ENCODE measurements at regions of chr1 and their contacts with region 1.

Region 1: DNA sequence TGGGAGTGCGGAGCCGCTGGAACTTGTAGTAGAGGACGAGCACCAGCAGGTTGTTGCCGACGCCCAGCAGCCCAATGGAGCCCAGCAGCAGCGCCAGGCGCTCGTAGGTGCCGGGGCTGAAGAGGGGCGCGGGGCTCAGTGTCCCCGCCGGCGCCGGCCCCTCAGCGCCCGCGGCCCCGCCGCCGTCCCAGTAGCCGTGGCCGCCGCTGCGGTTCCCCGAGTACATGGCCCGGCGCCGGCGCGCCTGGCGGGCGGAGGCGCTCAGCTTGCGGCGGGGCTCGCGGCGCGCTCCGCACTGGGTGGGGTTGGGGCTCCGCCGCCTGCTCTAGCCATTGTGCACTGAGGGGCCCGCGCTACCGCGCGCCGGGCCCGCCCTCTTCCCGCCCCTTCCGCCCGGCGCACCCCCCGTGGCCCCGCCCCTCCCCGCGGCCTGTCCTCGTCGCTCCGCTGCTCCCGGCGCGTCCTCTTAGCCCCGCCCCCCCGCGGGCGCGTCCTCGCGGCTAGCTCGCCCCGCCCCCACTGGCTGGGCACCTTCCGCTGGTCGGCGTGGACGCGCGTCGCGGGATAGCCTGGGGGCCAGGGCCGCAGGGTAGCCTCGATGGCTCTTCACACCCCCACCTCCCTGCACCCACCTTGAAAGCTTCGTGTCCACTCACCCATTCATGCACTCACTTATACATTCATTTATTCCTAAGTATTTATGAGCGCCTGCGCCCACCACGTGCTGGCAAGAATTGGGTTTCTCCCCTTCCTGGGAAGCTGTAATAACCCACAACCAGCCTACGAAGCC is at the starts of genes CHML and OPN3:
- DNase-seq: peak; percentile 75 to 95 (median 89)
- ATAC-seq: peak; percentile 94
- H3K4me3 ChIP-seq: peak within 1 kb of the TSS; percentile 87
- H3K4me3 Mint-ChIP-seq: peak within 1 kb of the TSS; percentile 93
- H3K27ac ChIP-seq: peak within 1 kb of the TSS; percentile 55 to 58
- H3K27ac Mint-ChIP-seq: peak within 1 kb of the TSS; percentile 82
- H3K4me1 ChIP-seq: peaks cover 17% of the 10 kb centered on the region
- H3K4me1 Mint-ChIP-seq: peaks cover 39% of the 10 kb centered on the region
- H3K27me3 ChIP-seq: no peaks in the 10 kb centered on the region
- H3K27me3 Mint-ChIP-seq: no peaks in the 10 kb centered on the region
- CTCF ChIP-seq: no peak
- total RNA-seq, gene CHML: 9.1 to 10.3 TPM
- total RNA-seq, gene OPN3: 1.9 to 2.3 TPM

Region 2: DNA sequence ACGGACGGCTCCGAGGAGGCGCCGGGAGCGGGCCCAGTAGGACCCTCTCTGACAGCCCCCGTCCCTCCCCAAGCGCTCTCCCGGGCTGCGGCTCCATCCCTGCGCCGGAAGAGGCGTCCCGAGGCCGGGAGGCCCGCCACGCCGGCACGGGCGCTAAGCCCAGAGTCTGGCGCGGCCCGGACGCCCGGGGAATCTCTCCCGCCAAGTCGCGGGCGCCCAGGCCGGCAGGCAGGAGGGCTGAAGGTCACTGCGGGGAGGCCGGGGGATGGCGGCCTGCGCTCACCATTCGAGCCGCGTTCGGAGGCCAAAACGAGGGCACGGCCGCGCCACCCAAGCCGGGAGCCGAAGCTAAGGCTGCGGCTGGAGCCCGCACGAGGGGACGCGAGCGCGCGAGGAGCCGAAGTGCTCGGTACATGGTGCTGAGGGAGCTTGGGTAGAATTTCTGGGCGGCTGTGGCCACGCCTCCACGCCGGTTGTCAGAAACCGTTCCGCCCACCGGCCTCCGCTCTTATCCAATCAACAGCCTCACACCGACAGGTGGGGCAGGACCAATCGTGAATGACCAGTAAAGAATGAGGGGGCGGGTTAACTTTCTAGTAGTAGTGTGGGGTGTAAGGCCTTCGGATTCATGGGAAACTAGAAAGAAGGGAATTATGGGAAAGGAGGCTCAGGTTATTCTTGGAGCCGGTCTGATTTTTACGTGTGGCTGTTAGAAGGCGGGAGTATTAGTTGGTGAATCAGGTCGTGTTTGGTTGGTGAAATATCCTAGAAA is 120.7 kb before region 1 on chr1 and contains the start of gene FH:
- CTCF ChIA-PET with region 1: no interaction called
- POLR2A ChIA-PET with region 1: interaction called, 4 read pairs
- intact Hi-C with region 1: loop called in 1 of 2 experiments (anchors 5 kb)
- DNase-seq: peak; percentile 82 to 98 (median 91)
- ATAC-seq: peak; percentile 97
- H3K4me3 ChIP-seq: peak within 1 kb of the TSS; percentile 64
- H3K4me3 Mint-ChIP-seq: peak within 1 kb of the TSS; percentile 97
- H3K27ac ChIP-seq: peak within 1 kb of the TSS in 1 of 2 donors; percentile 70
- H3K27ac Mint-ChIP-seq: peak within 1 kb of the TSS; percentile 85
- H3K4me1 ChIP-seq: peaks cover 5% of the 10 kb centered on the region
- H3K4me1 Mint-ChIP-seq: peaks cover 32% of the 10 kb centered on the region
- H3K27me3 ChIP-seq: peaks cover 8% of the 10 kb centered on the region in 2 experiments
- H3K27me3 Mint-ChIP-seq: peaks cover 25% of the 10 kb centered on the region
- CTCF ChIP-seq: no peak
- total RNA-seq, gene FH: 13.0 to 16.9 TPM

Region 3: GRCh38 chr1:241627453-241628259 is 12.6 kb before region 1 on chr1:
- CTCF ChIA-PET with region 1: interaction called, 9 read pairs
- POLR2A ChIA-PET with region 1: interaction called, 15 read pairs
- intact Hi-C with region 1: no loop called
- DNase-seq: peak in 10 of 14 experiments; percentile 8 to 82 (median 40)
- ATAC-seq: peak; percentile 89
- H3K4me3 ChIP-seq: peak overlapping the region; percentile 30
- H3K4me3 Mint-ChIP-seq: peak overlapping the region; percentile 88
- H3K27ac ChIP-seq: peak overlapping the region; percentile 13 to 59
- H3K27ac Mint-ChIP-seq: peak overlapping the region; percentile 94
- H3K4me1 ChIP-seq: peaks cover 2% of the 10 kb centered on the region
- H3K4me1 Mint-ChIP-seq: peaks cover 24% of the 10 kb centered on the region
- H3K27me3 ChIP-seq: no peaks in the 10 kb centered on the region
- H3K27me3 Mint-ChIP-seq: no peaks in the 10 kb centered on the region
- CTCF ChIP-seq: peak; percentile 88

Region 4: GRCh38 chr1:241677201-241677600 is 37.0 kb after region 1 on chr1:
- CTCF ChIA-PET with region 1: interaction called, 6 read pairs
- POLR2A ChIA-PET with region 1: interaction called, 16 read pairs
- intact Hi-C with region 1: loop called (anchors 2 to 5 kb)
- DNase-seq: peak in 7 of 14 experiments; percentile 5 to 79 (median 32)
- ATAC-seq: peak; percentile 96
- H3K4me3 ChIP-seq: peak overlapping the region; percentile 41
- H3K4me3 Mint-ChIP-seq: peak overlapping the region; percentile 78
- H3K27ac ChIP-seq: peak overlapping the region; percentile 46 to 72
- H3K27ac Mint-ChIP-seq: peak overlapping the region; percentile 96
- H3K4me1 ChIP-seq: peaks cover 10% of the 10 kb centered on the region
- H3K4me1 Mint-ChIP-seq: peaks cover 23% of the 10 kb centered on the region
- H3K27me3 ChIP-seq: no peaks in the 10 kb centered on the region
- H3K27me3 Mint-ChIP-seq: no peaks in the 10 kb centered on the region
- CTCF ChIP-seq: no peak

Measured in CD4-positive, alpha-beta T cell (primary cell).